Activated CD4-positive, alpha-beta T cell treated with anti-CD3 and anti-CD28 coated beads, Interleukin-2, amount 10 ng/mL, durations not matched to agents 24 days and 14 days (primary cell): ENCODE measurements at regions of chr10 and their contacts with region 1.

Region 1: GRCh38 chr10:75099952-75100763 is 11.3 kb upstream of the SAMD8 start:
- DNase-seq: peak; percentile 94
- H3K4me3 Mint-ChIP-seq: no peak overlapping the region
- H3K27ac Mint-ChIP-seq: peak overlapping the region; percentile 59
- H3K4me1 Mint-ChIP-seq: peaks cover 6% of the 10 kb centered on the region
- H3K27me3 Mint-ChIP-seq: no peaks in the 10 kb centered on the region

Region 2: GRCh38 chr10:74244097-74244685 is 856.0 kb before region 1 on chr10:
- intact Hi-C with region 1: loop called (anchors 2 kb)
- DNase-seq: peak; percentile 73
- H3K4me3 Mint-ChIP-seq: no peak overlapping the region
- H3K27ac Mint-ChIP-seq: no peak overlapping the region
- H3K4me1 Mint-ChIP-seq: peaks cover 2% of the 10 kb centered on the region
- H3K27me3 Mint-ChIP-seq: no peaks in the 10 kb centered on the region

Region 3: DNA sequence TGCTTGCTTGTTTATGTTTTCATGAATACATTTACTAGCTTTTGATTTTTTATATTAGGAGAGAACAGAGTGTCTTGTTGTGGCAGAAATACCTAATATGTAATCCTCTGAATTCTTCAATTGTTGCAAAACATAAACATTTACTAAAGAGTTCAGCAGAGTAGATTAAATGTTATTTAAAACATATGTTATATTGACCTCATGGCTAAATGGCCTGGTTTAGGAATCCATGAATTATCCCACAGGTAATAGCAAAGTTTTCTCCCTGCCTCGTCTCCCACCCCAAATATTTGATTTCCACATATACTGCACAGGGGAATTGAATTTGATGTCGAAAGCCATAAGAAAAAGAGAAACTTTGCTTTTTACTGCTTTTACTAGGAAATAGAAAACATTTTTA is 837.3 kb before region 1 on chr10:
- intact Hi-C with region 1: loop called (anchors 1 kb)
- DNase-seq: no peak
- H3K4me3 Mint-ChIP-seq: no peak overlapping the region
- H3K27ac Mint-ChIP-seq: peak overlapping the region; percentile 29
- H3K4me1 Mint-ChIP-seq: peaks cover 15% of the 10 kb centered on the region
- H3K27me3 Mint-ChIP-seq: no peaks in the 10 kb centered on the region

Region 4: DNA sequence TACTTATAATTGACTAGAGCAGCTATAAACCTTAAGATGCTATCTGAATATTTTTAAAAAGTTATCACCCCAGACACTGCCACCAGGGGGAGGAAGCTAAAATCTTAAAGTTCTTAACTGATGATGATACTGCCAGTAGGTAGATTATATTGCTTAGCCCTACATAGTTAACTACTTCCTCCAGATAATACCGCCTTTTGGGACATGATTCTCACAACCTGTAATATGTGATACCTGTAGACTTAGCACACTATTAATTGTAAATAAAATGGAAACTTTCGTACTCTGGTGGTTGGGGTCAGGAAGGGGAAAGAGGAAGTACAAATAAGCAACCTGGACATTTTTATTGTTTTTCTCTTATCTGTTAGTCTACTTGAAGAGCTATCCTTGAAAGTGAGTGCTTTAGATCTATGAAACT is 680.2 kb before region 1 on chr10:
- intact Hi-C with region 1: loop called (anchors 5 kb)
- DNase-seq: peak; percentile 79
- H3K4me3 Mint-ChIP-seq: no peak overlapping the region
- H3K27ac Mint-ChIP-seq: no peak overlapping the region
- H3K4me1 Mint-ChIP-seq: peaks cover 6% of the 10 kb centered on the region
- H3K27me3 Mint-ChIP-seq: no peaks in the 10 kb centered on the region

Region 5: GRCh38 chr10:75137533-75138438 is 37.6 kb after region 1 on chr10:
- intact Hi-C with region 1: no loop called
- DNase-seq: no peak
- H3K4me3 Mint-ChIP-seq: no peak overlapping the region
- H3K27ac Mint-ChIP-seq: peak overlapping the region; percentile 58
- H3K4me1 Mint-ChIP-seq: peaks cover 29% of the 10 kb centered on the region
- H3K27me3 Mint-ChIP-seq: no peaks in the 10 kb centered on the region

Region 6: DNA sequence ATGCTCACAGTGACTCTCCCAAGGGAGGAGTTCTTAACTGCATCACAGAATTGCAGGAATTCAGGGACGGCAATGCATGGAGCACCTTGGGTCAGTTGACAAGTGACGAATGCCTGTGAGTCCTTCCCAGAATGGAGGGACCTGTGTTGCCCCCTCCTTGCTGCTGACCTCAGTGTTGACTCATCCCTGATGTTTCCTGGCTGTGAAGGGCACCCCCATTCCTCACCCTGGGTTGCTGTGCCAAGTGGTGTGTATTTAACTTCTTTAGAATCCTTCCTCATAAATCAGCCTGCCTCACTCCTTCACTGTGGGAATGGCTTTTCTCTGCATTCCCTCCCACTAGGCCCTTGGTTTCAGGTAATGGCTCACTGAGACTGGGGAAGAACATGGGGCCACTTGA is 430.2 kb after region 1 on chr10:
- intact Hi-C with region 1: no loop called
- DNase-seq: no peak
- H3K4me3 Mint-ChIP-seq: no peak overlapping the region
- H3K27ac Mint-ChIP-seq: no peak overlapping the region
- H3K4me1 Mint-ChIP-seq: no peaks in the 10 kb centered on the region
- H3K27me3 Mint-ChIP-seq: no peaks in the 10 kb centered on the region

Region 7: GRCh38 chr10:75632805-75633462 is 532.8 kb after region 1 on chr10:
- intact Hi-C with region 1: no loop called
- DNase-seq: no peak
- H3K4me3 Mint-ChIP-seq: no peak overlapping the region
- H3K27ac Mint-ChIP-seq: no peak overlapping the region
- H3K4me1 Mint-ChIP-seq: no peaks in the 10 kb centered on the region
- H3K27me3 Mint-ChIP-seq: peaks cover 10% of the 10 kb centered on the region